MCF 10A (cell line): ENCODE measurements at regions of chr10 and their contacts with region 1.

Region 1: DNA sequence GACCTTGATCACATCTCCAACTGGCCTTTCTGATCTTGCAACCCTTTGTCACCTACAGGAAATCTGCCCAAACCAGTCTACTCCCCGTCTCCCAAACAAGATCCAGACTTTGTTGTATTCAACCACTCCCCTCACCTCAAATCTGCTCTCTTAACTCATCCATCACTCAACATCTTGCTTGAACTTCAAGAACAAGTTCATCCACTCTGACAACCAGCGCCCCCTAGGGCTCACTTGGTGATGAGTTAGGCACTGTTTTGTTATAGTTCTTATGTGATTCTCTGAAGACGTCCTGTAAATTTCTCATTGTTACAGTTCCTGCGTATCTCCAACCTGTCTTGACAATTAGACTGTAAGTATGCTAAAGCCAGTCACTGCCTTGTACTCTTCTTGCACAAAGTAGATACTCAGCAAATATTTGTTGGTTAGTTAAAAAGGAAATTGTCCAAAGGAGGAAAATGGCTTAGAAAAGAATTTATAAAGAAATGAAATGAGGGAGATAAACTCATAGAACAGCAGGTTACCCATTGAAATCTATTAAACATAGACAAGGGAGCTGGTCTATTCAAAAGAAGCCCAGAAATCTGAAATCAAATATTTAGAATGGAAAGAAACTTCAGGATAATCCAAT is 5.3 kb downstream of the FRMD4A start:
- DNase-seq: peak; percentile 68
- H3K4me3 Mint-ChIP-seq: no peak overlapping the region
- H3K27ac Mint-ChIP-seq: no peak overlapping the region
- H3K4me1 Mint-ChIP-seq: no peaks in the 10 kb centered on the region
- H3K27me3 Mint-ChIP-seq: peaks cover 4% of the 10 kb centered on the region
- CTCF ChIP-seq: peak; percentile 29

Region 2: GRCh38 chr10:14195433-14195832 is 130.0 kb before region 1 on chr10:
- CTCF ChIA-PET with region 1: no interaction called
- POLR2A ChIA-PET with region 1: no interaction called
- intact Hi-C with region 1: loop called (anchors 2 kb)
- DNase-seq: no peak
- H3K4me3 Mint-ChIP-seq: no peak overlapping the region
- H3K27ac Mint-ChIP-seq: no peak overlapping the region
- H3K4me1 Mint-ChIP-seq: no peaks in the 10 kb centered on the region
- H3K27me3 Mint-ChIP-seq: peaks cover 48% of the 10 kb centered on the region
- CTCF ChIP-seq: no peak